B cell (primary cell): ENCODE measurements at regions of chr7 and their contacts with region 1.

Region 1: DNA sequence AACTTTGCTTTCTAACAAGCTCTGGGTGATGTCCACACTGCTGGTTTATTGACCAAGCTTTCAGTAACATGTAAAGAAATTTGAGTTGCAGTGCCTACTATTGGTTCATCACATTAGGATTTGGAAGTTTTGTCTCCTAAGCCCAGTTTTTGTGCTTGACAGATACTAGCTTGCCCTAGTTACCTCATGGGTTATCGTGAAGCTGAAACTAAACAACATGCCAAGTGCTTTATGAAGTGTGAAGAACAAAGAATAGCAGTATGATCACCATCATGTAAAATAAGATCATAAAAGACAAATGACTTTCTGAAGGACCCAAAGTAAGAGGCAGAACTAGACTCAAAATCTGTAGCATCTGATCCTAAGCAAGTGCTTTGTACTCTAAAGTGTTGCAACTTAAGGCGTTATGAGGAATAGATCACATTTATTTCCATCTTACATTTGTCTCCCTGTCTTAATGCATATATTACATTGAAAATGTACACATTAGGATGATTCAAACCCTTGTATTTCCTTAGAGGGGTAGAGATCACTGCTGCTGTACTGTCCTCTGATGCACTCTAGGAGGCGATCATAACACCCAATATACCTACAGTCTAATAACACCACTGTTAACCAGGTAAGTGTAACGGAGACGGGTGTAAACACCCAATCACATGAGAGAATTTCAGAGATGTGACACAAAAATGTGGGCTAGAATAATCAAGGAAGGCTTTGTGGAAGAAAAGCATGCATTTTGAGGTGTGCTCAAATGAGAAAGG is 71.3 kb downstream of the NRCAM start:
- DNase-seq: peak; percentile 25
- ATAC-seq: peak; percentile 73
- H3K4me3 ChIP-seq: no peak overlapping the region
- H3K4me3 Mint-ChIP-seq: no peak overlapping the region
- H3K27ac ChIP-seq: no peak overlapping the region
- H3K27ac Mint-ChIP-seq: no peak overlapping the region
- H3K4me1 ChIP-seq: peaks cover 0 to 4% of the 10 kb centered on the region in 2 donors
- H3K4me1 Mint-ChIP-seq: peaks cover 18% of the 10 kb centered on the region
- H3K27me3 ChIP-seq: peaks cover 0 to 2% (median 0%) of the 10 kb centered on the region in 4 experiments
- H3K27me3 Mint-ChIP-seq: no peaks in the 10 kb centered on the region
- CTCF ChIP-seq: peak; percentile 52

Region 2: DNA sequence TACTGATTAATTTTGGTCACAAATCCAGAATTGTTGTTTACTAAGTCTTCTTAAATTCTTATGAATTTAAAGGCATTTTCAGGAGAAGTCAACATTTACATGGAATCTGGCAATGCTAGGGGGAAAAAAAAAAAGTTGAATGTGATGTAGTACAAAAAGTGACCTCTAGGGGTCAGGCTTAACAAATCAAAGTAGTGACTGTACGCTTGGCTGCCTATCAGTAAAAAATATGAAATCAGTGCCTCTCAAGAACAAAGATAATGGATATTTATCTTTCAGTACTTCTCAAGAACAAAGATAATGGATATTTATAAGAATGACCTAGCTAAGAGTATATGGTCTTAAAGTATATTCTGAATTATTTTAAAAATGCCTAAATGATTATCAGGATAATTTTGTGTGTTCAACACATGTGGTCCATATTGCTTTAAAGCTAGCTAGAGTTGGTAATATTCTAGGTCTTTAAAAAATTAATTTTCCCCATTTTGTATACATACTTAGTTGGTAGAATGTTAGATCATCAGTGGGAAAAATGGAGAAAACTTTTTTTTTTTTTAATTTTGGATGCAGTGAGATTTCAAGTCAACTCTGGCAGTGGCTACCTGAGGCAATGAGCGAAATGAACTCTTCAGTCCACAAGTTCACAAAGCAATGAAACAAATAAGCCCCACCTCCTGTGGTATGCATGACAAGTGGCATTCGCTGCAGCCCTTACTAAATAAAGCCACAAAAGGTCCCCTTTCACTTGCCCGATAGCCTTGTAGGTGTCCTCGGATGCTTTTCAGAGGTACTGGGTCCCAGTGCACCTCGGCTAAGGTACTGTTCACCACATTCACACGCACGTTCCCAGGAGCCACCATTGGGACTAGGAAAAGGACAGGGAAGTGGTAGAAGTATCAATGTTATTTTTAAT is 203.6 kb before region 1 on chr7:
- CTCF ChIA-PET with region 1: no interaction called
- POLR2A ChIA-PET with region 1: no interaction called
- intact Hi-C with region 1: loop called (anchors 10 kb)
- DNase-seq: peak; percentile 71
- ATAC-seq: peak; percentile 66
- H3K4me3 ChIP-seq: no peak overlapping the region
- H3K4me3 Mint-ChIP-seq: no peak overlapping the region
- H3K27ac ChIP-seq: no peak overlapping the region
- H3K27ac Mint-ChIP-seq: no peak overlapping the region
- H3K4me1 ChIP-seq: no peaks in the 10 kb centered on the region
- H3K4me1 Mint-ChIP-seq: no peaks in the 10 kb centered on the region
- H3K27me3 ChIP-seq: peaks cover 0 to 3% (median 0%) of the 10 kb centered on the region in 4 experiments
- H3K27me3 Mint-ChIP-seq: peaks cover 6% of the 10 kb centered on the region
- CTCF ChIP-seq: peak; percentile 90

Region 3: GRCh38 chr7:108347616-108348015 is 37.3 kb before region 1 on chr7:
- CTCF ChIA-PET with region 1: no interaction called
- POLR2A ChIA-PET with region 1: no interaction called
- intact Hi-C with region 1: no loop called
- DNase-seq: no peak
- ATAC-seq: no peak
- H3K4me3 ChIP-seq: no peak overlapping the region
- H3K4me3 Mint-ChIP-seq: no peak overlapping the region
- H3K27ac ChIP-seq: no peak overlapping the region
- H3K27ac Mint-ChIP-seq: no peak overlapping the region
- H3K4me1 ChIP-seq: no peaks in the 10 kb centered on the region
- H3K4me1 Mint-ChIP-seq: no peaks in the 10 kb centered on the region
- H3K27me3 ChIP-seq: peaks cover 0 to 3% (median 0%) of the 10 kb centered on the region in 4 experiments
- H3K27me3 Mint-ChIP-seq: peaks cover 9% of the 10 kb centered on the region
- CTCF ChIP-seq: no peak

Region 4: DNA sequence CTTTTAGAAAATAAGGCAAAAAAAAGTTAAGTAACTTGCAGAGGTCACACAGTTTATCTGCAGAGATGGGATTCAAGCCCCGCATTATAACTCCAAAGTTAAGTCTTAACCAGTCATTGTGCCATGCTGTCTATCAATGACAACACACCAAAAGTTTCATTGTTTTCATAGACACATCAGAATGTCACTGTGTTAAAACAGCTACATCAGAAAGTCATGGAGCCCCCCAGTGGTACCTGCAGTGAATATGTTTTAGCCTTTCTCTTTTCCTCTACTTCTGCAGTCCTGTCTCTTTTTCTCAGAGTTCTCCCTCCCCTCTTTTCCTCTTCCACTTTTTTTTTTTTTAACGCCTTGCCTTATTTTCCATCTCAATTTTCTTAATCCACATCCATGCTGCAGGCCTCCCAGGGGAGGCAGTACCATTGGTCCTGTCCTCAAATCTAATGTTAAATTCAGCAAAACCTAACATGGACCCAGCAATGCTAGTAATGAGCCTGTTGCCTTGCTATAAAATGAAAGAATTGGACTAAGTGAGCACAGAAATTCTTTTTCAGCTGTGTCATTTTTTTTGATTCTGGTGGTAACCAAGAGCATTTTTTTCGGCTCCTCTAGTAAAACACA is 75.1 kb after region 1 on chr7:
- CTCF ChIA-PET with region 1: interaction called, 8 read pairs
- POLR2A ChIA-PET with region 1: no interaction called
- intact Hi-C with region 1: loop called (anchors 2 kb)
- DNase-seq: peak; percentile 49
- ATAC-seq: peak; percentile 39
- H3K4me3 ChIP-seq: no peak overlapping the region
- H3K4me3 Mint-ChIP-seq: no peak overlapping the region
- H3K27ac ChIP-seq: no peak overlapping the region
- H3K27ac Mint-ChIP-seq: no peak overlapping the region
- H3K4me1 ChIP-seq: peaks cover 12 to 15% of the 10 kb centered on the region in 2 donors
- H3K4me1 Mint-ChIP-seq: peaks cover 10% of the 10 kb centered on the region
- H3K27me3 ChIP-seq: peaks cover 0 to 53% (median 29%) of the 10 kb centered on the region in 4 experiments
- H3K27me3 Mint-ChIP-seq: peaks cover 55% of the 10 kb centered on the region
- CTCF ChIP-seq: peak; percentile 71